ENCODE measurements at regions of chr2 and their contacts with region 1.

Region 1: GRCh38 chr2:113248997-113249770 is 29.5 kb downstream of the PAX8 start:
- DNase-seq: peak; percentile 46 to 91
- H3K4me3 ChIP-seq: no peak overlapping the region
- H3K27ac ChIP-seq: no peak overlapping the region
- H3K4me1 ChIP-seq: no peaks in the 10 kb centered on the region
- H3K27me3 ChIP-seq: no peaks in the 10 kb centered on the region
- CTCF ChIP-seq: peak; percentile 82 to 96 (median 84)

Region 2: DNA sequence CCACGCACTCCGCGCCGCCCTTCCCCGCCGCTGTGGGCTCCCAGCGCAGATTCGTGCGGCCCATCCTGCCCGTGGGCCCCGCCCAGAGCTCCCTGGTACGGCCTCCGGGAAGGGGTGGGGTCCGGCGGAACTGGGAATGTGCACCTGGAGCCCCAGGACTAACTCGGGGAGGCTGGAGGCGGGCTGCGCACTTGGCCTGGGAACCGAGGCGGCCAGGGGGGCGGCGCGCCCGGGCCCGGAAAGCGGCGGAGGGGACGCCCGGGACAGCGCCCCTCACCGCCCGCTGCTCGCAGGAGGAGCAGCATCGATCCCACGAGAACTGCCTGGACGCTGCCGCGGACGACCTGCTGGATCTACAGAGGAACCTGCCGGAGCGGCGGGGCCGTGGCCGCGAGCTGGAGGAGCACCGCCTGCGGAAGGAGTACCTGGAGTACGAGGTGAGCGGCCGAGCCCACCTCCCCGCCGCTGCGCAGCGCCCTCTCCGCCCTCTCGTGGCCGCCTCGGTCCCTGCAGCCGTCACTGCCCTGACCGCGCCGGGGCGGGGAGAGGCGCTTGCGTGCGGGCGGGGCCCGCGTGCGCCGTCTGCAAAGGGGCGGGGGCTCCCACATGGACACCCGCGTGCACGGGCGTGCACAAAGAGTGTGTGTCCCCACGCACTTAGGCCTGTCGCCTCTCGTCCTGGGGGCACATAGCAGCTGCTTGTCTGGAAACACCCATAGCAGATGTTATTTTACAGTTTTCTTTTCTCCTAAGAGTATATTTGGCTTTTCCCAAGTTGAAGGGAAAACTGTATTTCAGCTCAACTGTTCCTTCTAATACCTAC is 50.2 kb before region 1 on chr2:
- intact Hi-C with region 1: loop called (anchors 2 kb)
- DNase-seq: peak in 1 of 2 donors; percentile 81
- H3K4me3 ChIP-seq: peak overlapping the region; percentile 75 to 87
- H3K27ac ChIP-seq: peak overlapping the region in 1 of 2 donors; percentile 61
- H3K4me1 ChIP-seq: no peaks in the 10 kb centered on the region
- H3K27me3 ChIP-seq: no peaks in the 10 kb centered on the region
- CTCF ChIP-seq: peak; percentile 70 to 91 (median 91)

Region 3: GRCh38 chr2:113370478-113371091 is 121.4 kb after region 1 on chr2:
- intact Hi-C with region 1: loop called (anchors 1 kb)
- DNase-seq: peak in 1 of 2 donors; percentile 76
- H3K4me3 ChIP-seq: no peak overlapping the region
- H3K27ac ChIP-seq: no peak overlapping the region
- H3K4me1 ChIP-seq: no peaks in the 10 kb centered on the region
- H3K27me3 ChIP-seq: no peaks in the 10 kb centered on the region
- CTCF ChIP-seq: peak; percentile 60 to 76 (median 76)

Region 4: DNA sequence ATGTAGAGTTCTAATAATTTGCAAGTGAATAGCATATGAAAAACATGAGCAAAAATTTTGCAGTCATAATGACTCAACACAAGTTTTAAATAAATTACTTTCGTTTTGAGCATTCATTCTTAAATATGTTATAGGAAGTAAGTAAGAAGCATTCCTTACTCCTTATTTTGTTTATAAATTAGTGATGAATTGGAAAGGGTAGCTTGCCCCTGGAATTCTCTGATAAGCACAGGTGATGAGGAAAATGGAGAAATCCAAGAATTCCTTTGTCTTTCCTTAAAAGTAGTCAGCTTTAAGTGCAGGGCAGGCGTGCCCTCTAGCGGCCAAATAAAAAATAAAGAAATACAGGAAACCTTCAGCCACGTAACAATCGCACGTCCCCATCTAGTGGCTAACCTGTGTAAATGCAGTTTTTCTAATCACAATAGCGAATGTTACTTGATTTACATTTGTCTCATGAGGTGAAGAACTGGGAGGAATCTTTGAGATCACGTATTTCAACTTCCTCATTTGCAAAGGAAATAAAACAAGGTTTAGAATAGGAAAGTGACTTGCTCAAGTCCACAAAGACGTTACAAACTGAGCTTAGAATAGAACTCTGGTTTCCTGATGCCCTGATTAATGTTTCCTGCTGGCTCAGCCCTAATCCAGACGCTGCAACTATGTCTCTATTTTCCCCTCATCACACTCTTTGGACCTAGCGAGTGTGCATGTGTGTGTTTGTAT is 141.1 kb after region 1 on chr2:
- intact Hi-C with region 1: loop called (anchors 5 kb)
- DNase-seq: peak in 1 of 2 donors; percentile 76
- H3K4me3 ChIP-seq: peak overlapping the region in 1 of 2 donors; percentile 55
- H3K27ac ChIP-seq: peak overlapping the region in 1 of 2 donors; percentile 22
- H3K4me1 ChIP-seq: no peaks in the 10 kb centered on the region
- H3K27me3 ChIP-seq: no peaks in the 10 kb centered on the region
- CTCF ChIP-seq: peak; percentile 64 to 95 (median 93)

Measured in ascending aorta (tissue), 2 donors.